Transverse colon (tissue), 4 donors: ENCODE measurements at regions of chr2 and their contacts with region 1.

Region 1: GRCh38 chr2:49207204-49207603 is 52.9 kb upstream of the FSHR start:
- DNase-seq: no peak
- H3K4me3 ChIP-seq: no peak overlapping the region
- H3K27ac ChIP-seq: no peak overlapping the region
- H3K4me1 ChIP-seq: no peaks in the 10 kb centered on the region
- H3K27me3 ChIP-seq: no peaks in the 10 kb centered on the region
- CTCF ChIP-seq: no peak
- EP300 ChIP-seq: no peak
- POLR2A ChIP-seq: no peak

Region 2: GRCh38 chr2:49189512-49190225 is 17.5 kb before region 1 on chr2:
- in situ Hi-C with region 1: no loop called
- intact Hi-C with region 1: loop called (anchors 1 kb)
- DNase-seq: no peak
- H3K4me3 ChIP-seq: no peak overlapping the region
- H3K27ac ChIP-seq: no peak overlapping the region
- H3K4me1 ChIP-seq: no peaks in the 10 kb centered on the region
- H3K27me3 ChIP-seq: no peaks in the 10 kb centered on the region
- CTCF ChIP-seq: no peak
- EP300 ChIP-seq: no peak
- POLR2A ChIP-seq: no peak

Region 3: DNA sequence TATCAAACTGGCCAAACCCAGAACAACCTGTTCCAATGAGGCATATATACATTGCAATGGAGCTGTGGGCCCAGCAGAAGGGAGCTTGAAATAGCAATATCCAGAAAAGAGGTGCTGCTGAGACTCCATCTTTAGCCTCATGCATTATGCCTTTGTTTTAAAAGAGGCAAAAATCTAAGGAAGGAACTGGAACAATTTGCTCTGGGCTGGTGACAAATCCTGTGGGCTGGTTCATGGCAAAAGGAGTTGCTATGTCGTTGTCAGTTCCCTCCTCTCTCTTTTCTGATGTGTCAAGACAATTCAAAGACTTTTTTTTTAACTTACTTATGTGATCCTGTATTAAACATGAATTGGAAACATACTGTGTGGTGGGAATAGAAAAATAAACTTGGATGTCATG is 71.4 kb after region 1 on chr2:
- in situ Hi-C with region 1: no loop called
- intact Hi-C with region 1: no loop called
- DNase-seq: no peak
- H3K4me3 ChIP-seq: no peak overlapping the region
- H3K27ac ChIP-seq: no peak overlapping the region
- H3K4me1 ChIP-seq: no peaks in the 10 kb centered on the region
- H3K27me3 ChIP-seq: no peaks in the 10 kb centered on the region
- CTCF ChIP-seq: no peak
- EP300 ChIP-seq: no peak
- POLR2A ChIP-seq: no peak